Activated CD4-positive, alpha-beta memory T cell treated with anti-CD3 and anti-CD28 coated beads for 36 hours (primary cell): ENCODE measurements at regions of chr11 and their contacts with region 1.

Region 1: GRCh38 chr11:10293423-10294289 is at the start of gene SBF2:
- DNase-seq: peak; percentile 85
- H3K4me3 Mint-ChIP-seq: peak within 1 kb of the TSS; percentile 74
- H3K27ac Mint-ChIP-seq: no peak within 1 kb of the TSS
- H3K4me1 Mint-ChIP-seq: peaks cover 38% of the 10 kb centered on the region
- H3K27me3 Mint-ChIP-seq: peaks cover 31% of the 10 kb centered on the region
- total RNA-seq, gene SBF2: 7.0 to 7.1 TPM

Region 2: DNA sequence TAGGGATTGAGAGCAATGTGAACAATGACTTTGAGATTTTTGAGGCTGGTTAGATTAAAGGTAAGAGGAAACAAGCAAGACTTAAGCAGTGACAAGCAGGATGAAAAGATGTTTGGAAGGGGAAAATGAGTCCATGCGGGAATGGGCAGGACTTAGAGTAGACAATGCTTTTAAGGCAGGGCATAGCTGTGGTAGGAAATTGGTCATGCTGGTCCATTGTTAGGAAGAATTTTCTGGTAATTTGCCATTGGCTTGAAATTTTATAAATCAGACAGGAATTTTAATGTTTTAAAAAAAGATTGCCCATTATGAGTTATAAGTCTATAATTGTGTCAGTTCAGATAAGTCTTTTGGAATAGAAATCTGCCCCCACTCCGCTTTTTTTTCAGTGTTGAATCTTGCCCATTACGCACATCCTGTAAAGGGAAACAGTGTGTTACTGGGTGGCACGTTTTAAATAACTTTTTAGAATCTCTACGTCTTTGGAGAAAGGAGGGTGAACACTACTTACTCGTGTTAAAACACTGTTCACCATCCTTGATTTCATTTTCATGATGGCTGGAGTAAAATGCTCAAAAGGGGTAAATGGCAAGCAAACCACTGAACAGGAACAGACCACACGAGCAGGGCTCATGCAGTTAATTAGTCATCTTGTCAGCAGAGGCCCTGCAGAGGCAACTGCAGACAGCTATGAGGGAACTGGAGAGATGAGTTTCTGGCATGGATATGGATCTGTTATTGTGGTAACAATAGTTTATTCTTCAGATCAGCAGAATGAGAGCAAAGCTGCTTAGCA is 604.7 kb before region 1 on chr11:
- CTCF ChIA-PET with region 1: no interaction called
- POLR2A ChIA-PET with region 1: no interaction called
- intact Hi-C with region 1: no loop called
- DNase-seq: peak; percentile 16
- H3K4me3 Mint-ChIP-seq: no peak overlapping the region
- H3K27ac Mint-ChIP-seq: no peak overlapping the region
- H3K4me1 Mint-ChIP-seq: no peaks in the 10 kb centered on the region
- H3K27me3 Mint-ChIP-seq: no peaks in the 10 kb centered on the region

Region 3: GRCh38 chr11:10263929-10264328 is 29.7 kb before region 1 on chr11:
- CTCF ChIA-PET with region 1: no interaction called
- POLR2A ChIA-PET with region 1: no interaction called
- intact Hi-C with region 1: no loop called
- DNase-seq: no peak
- H3K4me3 Mint-ChIP-seq: no peak overlapping the region
- H3K27ac Mint-ChIP-seq: no peak overlapping the region
- H3K4me1 Mint-ChIP-seq: no peaks in the 10 kb centered on the region
- H3K27me3 Mint-ChIP-seq: no peaks in the 10 kb centered on the region

Region 4: DNA sequence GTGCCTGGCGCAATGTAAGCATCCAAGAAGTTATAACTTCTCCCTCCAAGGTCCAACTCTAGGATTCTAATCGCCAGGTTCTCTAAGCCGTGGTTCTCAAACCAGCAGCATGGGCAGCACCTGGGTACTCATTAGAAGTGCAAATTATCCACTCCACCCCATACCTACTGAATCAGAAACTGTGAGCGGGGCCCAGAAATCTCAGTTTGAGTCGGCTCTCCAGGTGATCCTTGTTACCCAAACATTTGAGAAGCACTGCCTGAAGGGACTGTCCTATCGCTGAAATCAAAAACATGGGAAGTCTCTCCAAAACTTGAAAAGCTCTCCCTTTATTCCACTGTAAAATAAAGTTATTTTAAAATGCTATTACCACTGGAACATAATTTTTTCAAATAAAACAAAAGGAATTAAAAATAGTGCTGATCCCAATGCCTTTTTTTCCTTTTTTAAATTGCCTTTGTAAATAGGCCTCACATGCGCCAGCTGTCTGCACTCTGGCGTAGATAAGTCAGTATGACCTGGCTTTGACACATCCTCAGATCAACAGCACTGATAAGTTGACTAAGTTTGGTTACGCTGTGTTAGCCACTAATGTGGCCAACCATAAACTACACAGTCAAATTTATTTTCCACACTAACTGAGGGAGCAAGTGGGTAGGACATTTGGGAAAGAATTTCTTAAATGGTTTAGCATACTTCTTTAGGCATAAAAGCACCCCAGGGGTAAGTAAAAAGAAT is 449.0 kb after region 1 on chr11:
- CTCF ChIA-PET with region 1: no interaction called
- POLR2A ChIA-PET with region 1: no interaction called
- intact Hi-C with region 1: loop called (anchors 5 kb)
- DNase-seq: peak; percentile 66
- H3K4me3 Mint-ChIP-seq: peak overlapping the region; percentile 37
- H3K27ac Mint-ChIP-seq: peak overlapping the region; percentile 74
- H3K4me1 Mint-ChIP-seq: peaks cover 39% of the 10 kb centered on the region
- H3K27me3 Mint-ChIP-seq: no peaks in the 10 kb centered on the region